AG04450 (cell line): ENCODE measurements at regions of chr12 and their contacts with region 1.

Region 1: DNA sequence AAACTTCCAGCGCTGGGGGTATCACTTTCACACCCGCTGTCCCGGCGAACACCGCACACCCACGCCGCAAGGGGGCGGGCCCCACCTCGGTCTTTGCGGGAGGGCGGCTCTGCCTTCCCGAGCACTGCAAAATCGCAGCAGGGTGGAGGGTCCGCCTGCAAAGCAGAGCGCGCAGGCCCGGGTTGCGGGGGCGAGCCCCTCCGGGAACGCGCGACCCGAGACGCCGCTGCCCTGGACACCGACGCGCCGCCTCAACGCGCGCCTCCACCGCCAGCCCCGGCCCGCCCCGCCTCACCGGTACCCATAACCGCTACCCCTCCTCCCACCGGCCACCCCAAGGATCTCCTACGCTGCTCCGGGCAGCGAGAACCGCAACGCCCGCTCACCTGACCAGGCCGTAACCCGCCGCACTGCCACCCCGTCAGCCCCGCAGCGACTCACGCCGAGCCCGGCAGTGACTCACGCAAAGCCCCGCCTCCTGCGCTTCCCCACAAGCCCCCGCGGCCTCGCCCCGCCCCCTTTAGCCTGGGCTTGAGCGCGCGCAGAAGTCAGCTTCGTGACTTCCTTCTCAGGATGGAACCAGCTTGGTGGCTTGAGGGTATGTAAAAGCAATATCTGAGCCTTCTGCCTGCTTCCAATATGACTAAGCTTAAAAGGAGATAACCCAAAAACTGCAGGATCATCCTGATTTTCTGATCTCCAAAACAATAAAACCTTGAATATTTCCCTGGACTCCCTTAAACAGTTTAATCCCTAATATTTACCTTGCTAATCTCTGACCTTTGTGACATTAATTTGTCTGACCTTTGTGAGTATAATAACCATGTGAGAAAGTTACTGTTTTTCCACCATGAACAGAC is at the start of gene RPAP3:
- DNase-seq: peak; percentile 74
- H3K4me3 ChIP-seq: peak within 1 kb of the TSS; percentile 78
- H3K27ac ChIP-seq: no peak within 1 kb of the TSS
- H3K27me3 ChIP-seq: no peaks in the 10 kb centered on the region
- CTCF ChIP-seq: peak; percentile 65
- polyA plus RNA-seq, gene RPAP3: 18.5 and 28.2 TPM in 2 replicates

Region 2: GRCh38 chr12:47419497-47419896 is 286.3 kb before region 1 on chr12:
- CTCF ChIA-PET with region 1: interaction called, 14 read pairs
- POLR2A ChIA-PET with region 1: no interaction called
- DNase-seq: no peak
- H3K4me3 ChIP-seq: no peak overlapping the region
- H3K27ac ChIP-seq: no peak overlapping the region
- H3K27me3 ChIP-seq: no peaks in the 10 kb centered on the region
- CTCF ChIP-seq: no peak

Region 3: GRCh38 chr12:47591361-47591791 is 114.4 kb before region 1 on chr12:
- CTCF ChIA-PET with region 1: no interaction called
- POLR2A ChIA-PET with region 1: no interaction called
- DNase-seq: no peak
- H3K4me3 ChIP-seq: no peak overlapping the region
- H3K27ac ChIP-seq: no peak overlapping the region
- H3K27me3 ChIP-seq: no peaks in the 10 kb centered on the region
- CTCF ChIP-seq: no peak